Activated CD4-positive, alpha-beta T cell treated with anti-CD3 and anti-CD28 coated beads for 36 hours (primary cell): ENCODE measurements at regions of chr17 and their contacts with region 1.

Region 1: GRCh38 chr17:43170766-43171585 is at the start of gene NBR1:
- DNase-seq: peak; percentile 97
- ATAC-seq: peak; percentile 86
- H3K4me3 Mint-ChIP-seq: no peak within 1 kb of the TSS
- H3K27ac Mint-ChIP-seq: no peak within 1 kb of the TSS
- H3K4me1 Mint-ChIP-seq: peaks cover 30% of the 10 kb centered on the region
- H3K27me3 Mint-ChIP-seq: no peaks in the 10 kb centered on the region
- total RNA-seq, gene NBR1: 52.8 to 55.6 TPM

Region 2: DNA sequence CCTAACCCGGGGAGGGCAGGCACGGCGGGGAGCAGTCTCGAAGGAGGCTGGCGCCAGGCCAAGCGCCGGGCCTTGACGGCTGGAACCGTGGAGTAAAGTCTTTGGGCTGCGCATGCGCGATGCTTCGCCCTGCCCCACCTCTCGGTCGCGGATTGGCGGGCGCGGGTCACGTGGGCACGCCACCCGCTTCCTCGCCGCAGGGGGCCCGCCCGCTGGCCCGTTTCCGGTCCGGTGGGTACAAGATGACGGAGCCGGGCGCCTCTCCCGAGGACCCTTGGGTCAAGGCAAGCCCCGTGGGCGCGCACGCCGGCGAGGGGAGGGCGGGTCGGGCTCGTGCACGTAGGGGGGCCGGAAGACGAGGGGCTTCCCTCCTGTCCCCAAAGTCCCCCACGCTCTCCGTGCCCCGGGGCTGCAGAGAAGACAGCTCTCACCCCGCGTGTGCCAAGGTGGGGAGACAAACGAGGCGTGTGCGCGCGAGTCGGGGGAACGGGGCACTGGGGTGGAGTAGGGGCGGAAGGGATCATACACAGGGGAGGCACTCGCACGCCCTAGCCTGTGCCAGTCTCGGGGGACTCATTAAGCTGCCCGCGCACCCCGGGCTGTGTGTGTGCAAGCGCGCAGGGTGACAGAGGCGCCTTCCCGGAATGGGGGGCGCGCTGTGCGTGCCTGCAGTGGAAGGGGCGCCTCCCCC is 603.9 kb before region 1 on chr17 and contains the start of gene MLX:
- CTCF ChIA-PET with region 1: no interaction called
- POLR2A ChIA-PET with region 1: no interaction called
- intact Hi-C with region 1: loop called in 1 of 2 experiments (anchors 10 kb)
- DNase-seq: peak; percentile 95
- ATAC-seq: peak; percentile 74
- H3K4me3 Mint-ChIP-seq: peak within 1 kb of the TSS; percentile 96
- H3K27ac Mint-ChIP-seq: peak within 1 kb of the TSS; percentile 96
- H3K4me1 Mint-ChIP-seq: peaks cover 35% of the 10 kb centered on the region
- H3K27me3 Mint-ChIP-seq: no peaks in the 10 kb centered on the region
- total RNA-seq, gene MLX: 38.7 to 40.7 TPM

Region 3: GRCh38 chr17:42832974-42833766 is 337.8 kb before region 1 on chr17 and contains the start of gene PSME3:
- CTCF ChIA-PET with region 1: no interaction called
- POLR2A ChIA-PET with region 1: no interaction called
- intact Hi-C with region 1: loop called in 1 of 2 experiments (anchors 2 kb)
- DNase-seq: peak; percentile 94
- ATAC-seq: peak; percentile 90
- H3K4me3 Mint-ChIP-seq: peak within 1 kb of the TSS; percentile 96
- H3K27ac Mint-ChIP-seq: peak within 1 kb of the TSS; percentile 98
- H3K4me1 Mint-ChIP-seq: peaks cover 18% of the 10 kb centered on the region
- H3K27me3 Mint-ChIP-seq: no peaks in the 10 kb centered on the region
- total RNA-seq, gene PSME3: 116 to 118 TPM

Region 4: GRCh38 chr17:42997984-42998938 is 172.7 kb before region 1 on chr17 and contains the start of gene RPL27:
- CTCF ChIA-PET with region 1: no interaction called
- POLR2A ChIA-PET with region 1: interaction called, 3 read pairs
- intact Hi-C with region 1: loop called (anchors 1 kb)
- DNase-seq: peak; percentile 98
- ATAC-seq: peak; percentile 98
- H3K4me3 Mint-ChIP-seq: peak within 1 kb of the TSS; percentile 95
- H3K27ac Mint-ChIP-seq: peak within 1 kb of the TSS; percentile 99
- H3K4me1 Mint-ChIP-seq: peaks cover 31% of the 10 kb centered on the region
- H3K27me3 Mint-ChIP-seq: no peaks in the 10 kb centered on the region
- total RNA-seq, gene RPL27: 1,703 to 2,161 TPM

Region 5: GRCh38 chr17:43200127-43200526 is 29.2 kb after region 1 on chr17:
- CTCF ChIA-PET with region 1: interaction called, 5 read pairs
- POLR2A ChIA-PET with region 1: interaction called, 10 read pairs
- intact Hi-C with region 1: no loop called
- DNase-seq: peak; percentile 30
- ATAC-seq: peak; percentile 61
- H3K4me3 Mint-ChIP-seq: no peak overlapping the region
- H3K27ac Mint-ChIP-seq: peak overlapping the region; percentile 37
- H3K4me1 Mint-ChIP-seq: peaks cover 8% of the 10 kb centered on the region
- H3K27me3 Mint-ChIP-seq: no peaks in the 10 kb centered on the region

Region 6: GRCh38 chr17:43367737-43368242 is 196.8 kb after region 1 on chr17:
- CTCF ChIA-PET with region 1: no interaction called
- POLR2A ChIA-PET with region 1: interaction called, 13 read pairs
- intact Hi-C with region 1: no loop called
- DNase-seq: peak; percentile 62
- ATAC-seq: peak; percentile 53
- H3K4me3 Mint-ChIP-seq: peak overlapping the region; percentile 85
- H3K27ac Mint-ChIP-seq: peak overlapping the region; percentile 100
- H3K4me1 Mint-ChIP-seq: peaks cover 57% of the 10 kb centered on the region
- H3K27me3 Mint-ChIP-seq: no peaks in the 10 kb centered on the region

Region 7: GRCh38 chr17:44199553-44200477 is 1028.8 kb after region 1 on chr17 and contains the start of gene ATXN7L3:
- CTCF ChIA-PET with region 1: no interaction called
- POLR2A ChIA-PET with region 1: no interaction called
- intact Hi-C with region 1: loop called in 1 of 2 experiments (anchors 2 kb)
- DNase-seq: peak; percentile 100
- ATAC-seq: peak; percentile 84
- H3K4me3 Mint-ChIP-seq: peak within 1 kb of the TSS; percentile 88
- H3K27ac Mint-ChIP-seq: peak within 1 kb of the TSS; percentile 94
- H3K4me1 Mint-ChIP-seq: peaks cover 38% of the 10 kb centered on the region
- H3K27me3 Mint-ChIP-seq: no peaks in the 10 kb centered on the region
- total RNA-seq, gene ATXN7L3: 66.3 to 70.6 TPM